Activated B cell treated with CpG ODN at 0.5 μM for 24 hours (primary cell): ENCODE measurements at regions of chr4 and their contacts with region 1.

Region 1: GRCh38 chr4:139554893-139555704 is 920 bp downstream of the SETD7 start:
- DNase-seq: peak; percentile 71
- ATAC-seq: peak; percentile 60
- H3K4me3 Mint-ChIP-seq: peak overlapping the region; percentile 95
- H3K27ac Mint-ChIP-seq: peak overlapping the region; percentile 94
- H3K4me1 Mint-ChIP-seq: peaks cover 59% of the 10 kb centered on the region
- H3K27me3 Mint-ChIP-seq: no peaks in the 10 kb centered on the region
- CTCF ChIP-seq: no peak

Region 2: GRCh38 chr4:139015269-139015947 is 539.7 kb before region 1 on chr4 and contains the start of gene NOCT:
- CTCF ChIA-PET with region 1: no interaction called
- POLR2A ChIA-PET with region 1: interaction called, 3 read pairs
- intact Hi-C with region 1: loop called (anchors 1 kb)
- DNase-seq: peak; percentile 86
- ATAC-seq: peak; percentile 91
- H3K4me3 Mint-ChIP-seq: peak within 1 kb of the TSS; percentile 92
- H3K27ac Mint-ChIP-seq: peak within 1 kb of the TSS; percentile 99
- H3K4me1 Mint-ChIP-seq: peaks cover 32% of the 10 kb centered on the region
- H3K27me3 Mint-ChIP-seq: no peaks in the 10 kb centered on the region
- CTCF ChIP-seq: no peak
- total RNA-seq, gene NOCT: 9.1 and 9.4 TPM in 2 replicates

Region 3: GRCh38 chr4:139301113-139301820 is 253.8 kb before region 1 on chr4 and contains the start of gene NAA15:
- CTCF ChIA-PET with region 1: no interaction called
- POLR2A ChIA-PET with region 1: interaction called, 18 read pairs
- intact Hi-C with region 1: loop called (anchors 2 kb)
- DNase-seq: peak; percentile 93
- ATAC-seq: peak; percentile 91
- H3K4me3 Mint-ChIP-seq: peak within 1 kb of the TSS; percentile 99
- H3K27ac Mint-ChIP-seq: peak within 1 kb of the TSS; percentile 98
- H3K4me1 Mint-ChIP-seq: peaks cover 49% of the 10 kb centered on the region
- H3K27me3 Mint-ChIP-seq: no peaks in the 10 kb centered on the region
- CTCF ChIP-seq: no peak
- total RNA-seq, gene NAA15: 62.6 and 66.5 TPM in 2 replicates

Region 4: GRCh38 chr4:139567159-139567870 is 12.2 kb after region 1 on chr4:
- CTCF ChIA-PET with region 1: interaction called, 4 read pairs
- POLR2A ChIA-PET with region 1: interaction called, 8 read pairs
- intact Hi-C with region 1: loop called (anchors 1 kb)
- DNase-seq: no peak
- ATAC-seq: peak; percentile 69
- H3K4me3 Mint-ChIP-seq: no peak overlapping the region
- H3K27ac Mint-ChIP-seq: peak overlapping the region; percentile 5
- H3K4me1 Mint-ChIP-seq: peaks cover 4% of the 10 kb centered on the region
- H3K27me3 Mint-ChIP-seq: no peaks in the 10 kb centered on the region
- CTCF ChIP-seq: no peak

Region 5: DNA sequence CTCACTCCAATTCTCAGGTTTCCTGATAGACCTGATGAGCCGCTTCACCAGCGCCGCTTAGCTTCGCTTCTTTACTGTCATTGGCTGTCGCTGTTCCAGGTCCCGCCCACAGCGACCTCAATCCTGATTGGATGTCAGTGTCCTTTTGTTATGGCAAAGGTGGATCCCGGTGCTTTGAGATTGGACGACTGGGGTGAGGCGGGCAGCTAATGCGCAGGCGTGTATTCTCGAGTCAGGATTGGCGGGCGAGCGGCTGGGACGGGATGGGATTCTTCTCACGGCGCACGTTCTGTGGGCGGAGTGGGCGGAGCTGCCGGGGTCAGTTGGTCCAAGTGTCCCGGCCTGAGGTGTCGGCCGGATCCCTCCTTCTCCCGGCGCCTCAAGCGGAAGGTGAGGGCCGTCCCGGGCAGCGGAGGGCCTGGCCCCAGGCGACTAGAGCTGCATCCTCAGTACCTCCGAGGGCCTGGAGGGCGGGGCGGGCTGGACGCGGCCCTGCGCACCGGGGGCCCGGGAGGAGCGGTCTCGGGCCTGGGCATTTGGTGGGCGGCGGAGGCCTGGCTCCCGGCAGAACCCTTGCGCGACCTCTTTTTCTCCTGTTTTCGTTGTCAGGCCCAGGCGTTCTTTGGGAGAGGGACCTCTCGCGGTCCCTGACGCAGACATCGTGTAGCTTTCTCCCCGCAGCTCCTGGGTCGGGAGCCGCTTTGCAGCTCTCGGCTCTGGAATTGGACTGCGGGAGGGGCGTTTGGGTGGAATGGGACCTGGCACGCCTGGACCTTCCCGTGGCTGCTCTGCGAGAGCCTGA is 818.4 kb after region 1 on chr4 and contains the start of gene SCOC:
- CTCF ChIA-PET with region 1: no interaction called
- POLR2A ChIA-PET with region 1: no interaction called
- intact Hi-C with region 1: loop called (anchors 5 kb)
- DNase-seq: peak; percentile 85
- ATAC-seq: peak; percentile 95
- H3K4me3 Mint-ChIP-seq: no peak within 1 kb of the TSS
- H3K27ac Mint-ChIP-seq: peak within 1 kb of the TSS; percentile 74
- H3K4me1 Mint-ChIP-seq: peaks cover 22% of the 10 kb centered on the region
- H3K27me3 Mint-ChIP-seq: no peaks in the 10 kb centered on the region
- CTCF ChIP-seq: no peak
- total RNA-seq, gene SCOC: 18.0 and 19.9 TPM in 2 replicates